PC-3 (cell line): ENCODE measurements at regions of chr3 and their contacts with region 1.

Region 1: DNA sequence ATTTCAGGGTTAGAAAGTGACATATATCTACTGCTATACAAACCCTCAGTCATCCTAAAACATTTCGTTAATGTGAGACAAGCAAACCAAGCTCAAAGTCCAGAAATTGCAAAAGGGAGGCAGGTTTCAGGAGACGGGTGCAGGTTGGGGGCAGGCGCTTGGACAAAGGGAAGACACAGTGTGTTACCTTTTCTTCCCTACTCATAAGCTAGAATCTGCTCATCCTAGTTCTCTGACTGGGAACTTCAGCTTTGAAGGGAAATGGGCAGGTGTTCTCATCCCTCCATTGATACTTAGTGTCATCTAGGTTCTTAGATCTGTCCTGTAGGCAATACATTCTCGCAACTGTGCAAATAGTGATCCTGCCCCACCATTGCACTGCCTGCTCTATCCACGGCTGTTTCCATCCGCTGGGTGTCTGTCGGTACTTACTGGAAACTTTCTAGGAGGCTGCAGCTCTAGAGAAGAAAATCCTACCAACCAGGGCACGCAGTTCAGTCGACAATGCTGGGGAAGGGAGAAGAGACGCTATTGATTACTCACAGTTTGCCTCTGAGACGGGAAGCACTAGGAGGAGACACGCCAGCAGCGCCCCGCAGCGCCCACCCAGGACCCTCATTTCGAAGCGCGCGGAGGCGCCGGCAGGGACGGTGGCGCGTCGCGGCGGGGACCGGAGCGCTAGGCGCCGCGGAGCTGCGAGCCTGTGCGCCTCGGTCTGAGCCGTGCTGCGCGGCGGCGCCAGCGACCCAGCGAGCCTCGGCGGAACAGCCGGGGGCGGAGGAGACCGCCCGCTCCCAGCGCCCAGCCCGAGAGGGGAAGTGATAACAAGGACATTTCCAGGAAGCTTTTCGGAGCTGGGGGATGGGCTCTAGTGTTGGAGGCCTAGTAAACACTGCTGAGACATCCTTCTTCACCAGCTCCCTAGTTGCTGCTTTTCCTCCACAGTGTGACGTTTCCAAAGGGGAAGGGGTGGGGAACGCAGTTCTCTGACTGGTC is at the start of gene PROS1:
- DNase-seq: peak; percentile 68
- ATAC-seq: peak; percentile 79
- H3K4me3 ChIP-seq: peak within 1 kb of the TSS; percentile 72
- H3K27ac ChIP-seq: peak within 1 kb of the TSS; percentile 22
- H3K4me1 ChIP-seq: peaks cover 13% of the 10 kb centered on the region; the same call in 1 of the 2 replicates
- H3K27me3 ChIP-seq: no peaks in the 10 kb centered on the region
- CTCF ChIP-seq: peak; percentile 31; the same call in 1 of the 2 replicates
- total RNA-seq, gene PROS1: 5.5 and 5.8 TPM in 2 replicates

Region 2: GRCh38 chr3:93843981-93844380 is 129.4 kb before region 1 on chr3:
- CTCF ChIA-PET with region 1: no interaction called
- POLR2A ChIA-PET with region 1: no interaction called
- intact Hi-C with region 1: loop called (anchors 2 kb)
- DNase-seq: peak; percentile 88
- ATAC-seq: peak; percentile 72
- H3K4me3 ChIP-seq: no peak overlapping the region
- H3K27ac ChIP-seq: no peak overlapping the region
- H3K4me1 ChIP-seq: peaks cover 16% of the 10 kb centered on the region; the same call in 1 of the 2 replicates
- H3K27me3 ChIP-seq: no peaks in the 10 kb centered on the region
- CTCF ChIP-seq: no peak

Region 3: DNA sequence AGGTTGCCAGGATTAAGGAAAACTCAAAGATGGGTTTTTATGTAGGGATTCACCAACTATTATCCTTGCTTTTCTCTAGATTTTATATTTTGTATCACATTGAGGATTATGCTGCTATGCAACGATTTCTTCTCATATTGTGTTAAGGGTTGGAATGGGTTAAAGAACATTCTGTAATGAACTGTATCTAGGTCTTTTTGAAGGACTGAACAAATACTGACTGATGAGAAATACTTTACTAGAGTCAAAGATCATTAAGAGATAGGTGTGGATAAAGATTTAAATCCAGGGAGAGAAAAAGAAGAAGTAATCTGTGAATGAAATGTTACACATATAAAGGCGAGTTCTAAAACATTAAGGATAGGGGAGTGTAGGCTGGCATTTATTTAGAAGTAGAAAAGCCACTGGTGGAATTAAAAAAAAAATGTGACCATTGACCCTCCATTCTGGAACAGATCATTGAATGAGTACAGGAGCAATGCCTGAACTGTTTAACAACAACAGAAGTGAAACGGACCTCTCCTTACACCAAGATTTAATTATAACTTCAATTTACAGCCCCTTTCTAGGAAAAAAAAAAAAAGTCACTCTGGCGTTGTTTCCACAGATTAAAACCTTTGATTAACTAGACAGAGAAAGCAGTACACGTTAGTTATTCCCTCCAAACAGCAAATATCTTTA is 38.9 kb before region 1 on chr3:
- CTCF ChIA-PET with region 1: no interaction called
- POLR2A ChIA-PET with region 1: interaction called, 41 read pairs
- intact Hi-C with region 1: no loop called
- DNase-seq: no peak
- ATAC-seq: no peak
- H3K4me3 ChIP-seq: no peak overlapping the region
- H3K27ac ChIP-seq: no peak overlapping the region
- H3K4me1 ChIP-seq: no peaks in the 10 kb centered on the region
- H3K27me3 ChIP-seq: no peaks in the 10 kb centered on the region
- CTCF ChIP-seq: no peak